ENCODE measurements at regions of chr17 and their contacts with region 1.

Region 1: DNA sequence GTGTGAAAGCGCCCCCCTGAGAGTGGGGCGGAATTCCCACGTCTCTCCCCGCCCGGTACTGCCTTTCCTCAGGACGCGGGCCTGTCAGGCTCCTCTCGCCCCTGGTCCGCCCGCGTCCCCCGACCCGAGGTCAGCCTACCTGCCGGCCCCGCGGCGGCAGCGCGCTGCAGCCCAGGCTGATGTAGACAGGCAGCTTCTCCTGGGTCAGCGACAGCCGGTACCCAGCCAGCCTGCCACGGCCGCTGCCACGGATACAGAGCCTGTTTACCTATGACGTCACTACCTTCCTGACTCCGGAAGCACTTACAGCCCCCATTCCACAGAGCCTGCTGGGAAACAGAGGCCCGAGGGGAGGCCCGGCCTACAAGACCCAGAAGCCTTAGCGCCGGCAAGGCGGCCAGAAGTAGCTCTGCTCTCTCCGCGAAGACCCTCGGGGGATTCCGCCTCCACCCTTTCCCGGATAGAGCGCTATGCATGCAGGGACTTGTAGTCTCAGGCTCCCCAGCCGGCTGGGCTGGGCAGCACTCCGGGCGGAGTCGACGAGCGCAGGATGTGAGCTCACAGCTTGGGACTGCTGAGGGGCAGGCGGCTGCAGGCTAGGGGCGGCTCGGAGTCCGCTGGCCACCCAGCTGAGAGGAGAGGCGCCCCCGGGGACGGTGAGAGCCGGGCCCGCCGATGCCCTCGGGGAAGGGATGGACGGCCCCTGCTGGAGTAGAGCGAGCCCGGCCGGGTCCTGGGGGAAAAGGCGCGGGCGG is at the starts of genes IFT20 and TNFAIP1:
- DNase-seq: peak; percentile 90
- ATAC-seq: peak; percentile 96
- H3K4me3 Mint-ChIP-seq: peak within 1 kb of the TSS; percentile 96
- H3K27ac Mint-ChIP-seq: peak within 1 kb of the TSS; percentile 89
- H3K4me1 Mint-ChIP-seq: peaks cover 37% of the 10 kb centered on the region
- H3K27me3 Mint-ChIP-seq: no peaks in the 10 kb centered on the region
- CTCF ChIP-seq: no peak
- total RNA-seq, gene IFT20: 24.9 and 25.9 TPM in 2 replicates
- total RNA-seq, gene TNFAIP1: 16.3 and 18.9 TPM in 2 replicates

Region 2: DNA sequence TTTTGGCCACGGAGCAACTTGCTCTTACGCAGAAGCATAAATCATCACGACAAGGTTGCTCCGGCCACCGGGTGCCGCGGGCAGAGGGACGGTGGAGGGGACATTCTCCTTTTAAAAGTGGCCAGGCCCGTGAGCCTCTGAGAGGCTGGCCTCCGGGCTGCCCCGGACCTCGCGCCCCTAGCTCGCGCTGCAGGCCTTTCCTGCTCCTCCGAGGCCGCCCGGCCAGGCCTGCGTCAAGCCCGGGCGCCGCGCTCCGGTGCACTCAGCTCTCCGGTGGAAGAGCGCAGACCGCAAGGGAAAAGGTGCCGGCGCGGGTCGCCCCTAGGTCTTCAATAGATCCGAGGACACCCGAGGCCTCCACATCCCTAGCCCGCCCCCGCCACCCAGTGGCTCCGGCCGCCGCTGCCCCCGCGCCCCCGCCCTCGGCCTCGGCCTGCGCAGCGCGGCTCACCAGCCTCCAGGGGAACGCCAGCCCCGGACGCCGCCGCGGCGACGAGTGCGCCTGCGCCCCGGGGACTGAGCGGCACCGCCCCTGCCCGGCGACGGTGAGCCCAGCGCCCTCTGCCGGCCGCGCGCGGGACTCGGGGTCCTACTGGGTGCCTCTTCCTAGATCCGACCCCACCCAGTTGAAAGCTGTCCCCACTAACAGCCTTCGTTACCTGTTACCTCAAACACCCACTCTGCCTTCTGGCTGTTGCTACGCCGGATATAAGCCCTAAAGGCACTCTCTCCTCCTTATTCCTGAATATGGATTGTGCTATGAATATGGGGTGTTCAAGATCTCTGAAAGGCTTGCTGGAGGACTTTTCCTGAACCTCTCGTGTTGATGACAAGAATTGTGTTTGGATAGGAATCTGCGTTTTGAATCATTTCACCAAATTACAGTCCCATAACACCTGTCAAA is 442.3 kb before region 1 on chr17 and contains the start of gene LYRM9:
- CTCF ChIA-PET with region 1: no interaction called
- POLR2A ChIA-PET with region 1: no interaction called
- intact Hi-C with region 1: loop called (anchors 2 kb)
- DNase-seq: peak; percentile 97
- ATAC-seq: peak; percentile 96
- H3K4me3 Mint-ChIP-seq: peak within 1 kb of the TSS; percentile 84
- H3K27ac Mint-ChIP-seq: peak within 1 kb of the TSS; percentile 69
- H3K4me1 Mint-ChIP-seq: peaks cover 17% of the 10 kb centered on the region
- H3K27me3 Mint-ChIP-seq: no peaks in the 10 kb centered on the region
- CTCF ChIP-seq: peak; percentile 91
- total RNA-seq, gene LYRM9: 7.2 and 7.5 TPM in 2 replicates

Region 3: DNA sequence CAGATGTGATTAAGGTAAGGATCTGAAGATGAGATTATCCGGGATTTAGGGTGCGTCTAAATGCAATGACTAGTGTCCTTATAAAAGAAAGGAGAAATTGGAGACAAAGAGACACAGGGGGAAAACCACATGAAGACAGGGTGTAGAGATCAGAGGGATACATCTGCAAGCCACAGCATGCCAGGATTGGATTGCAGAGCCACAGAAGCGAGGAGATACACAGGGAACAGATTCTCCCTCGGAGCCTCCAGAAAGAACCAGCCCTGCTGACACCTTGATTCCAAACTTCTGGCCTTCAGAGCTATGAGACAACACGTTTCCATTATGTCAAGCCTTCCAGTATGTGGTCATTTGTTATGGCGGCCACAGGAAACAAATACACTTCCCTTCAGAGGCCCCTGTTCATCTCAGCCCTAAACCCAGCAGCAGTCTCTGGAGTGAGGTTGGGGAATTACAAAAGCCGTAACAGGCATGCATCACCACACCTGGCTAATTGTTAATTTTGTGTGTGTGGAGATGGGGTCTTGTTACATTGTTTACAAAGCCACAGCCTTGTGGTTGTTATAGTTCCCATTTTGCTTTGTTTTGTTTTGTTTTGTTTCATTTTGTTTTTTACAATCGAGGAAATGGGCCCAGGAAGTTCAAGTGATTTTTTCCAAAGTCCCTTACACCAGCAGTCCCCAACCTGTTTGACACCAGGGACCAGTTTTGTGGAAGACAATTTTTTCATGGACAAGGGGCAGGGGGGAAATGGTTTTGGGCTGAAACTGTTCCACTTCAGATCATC is 390.6 kb before region 1 on chr17:
- CTCF ChIA-PET with region 1: no interaction called
- POLR2A ChIA-PET with region 1: no interaction called
- intact Hi-C with region 1: no loop called
- DNase-seq: no peak
- ATAC-seq: peak; percentile 40
- H3K4me3 Mint-ChIP-seq: peak overlapping the region; percentile 35
- H3K27ac Mint-ChIP-seq: peak overlapping the region; percentile 79
- H3K4me1 Mint-ChIP-seq: peaks cover 37% of the 10 kb centered on the region
- H3K27me3 Mint-ChIP-seq: no peaks in the 10 kb centered on the region
- CTCF ChIP-seq: no peak

Region 4: GRCh38 chr17:28318759-28319660 is 16.4 kb before region 1 on chr17 and contains the start of gene TMEM97:
- CTCF ChIA-PET with region 1: no interaction called
- POLR2A ChIA-PET with region 1: interaction called, 20 read pairs
- intact Hi-C with region 1: loop called (anchors 1 kb)
- DNase-seq: peak; percentile 85
- ATAC-seq: peak; percentile 98
- H3K4me3 Mint-ChIP-seq: peak within 1 kb of the TSS; percentile 90
- H3K27ac Mint-ChIP-seq: peak within 1 kb of the TSS; percentile 76
- H3K4me1 Mint-ChIP-seq: peaks cover 25% of the 10 kb centered on the region
- H3K27me3 Mint-ChIP-seq: no peaks in the 10 kb centered on the region
- CTCF ChIP-seq: no peak
- total RNA-seq, gene TMEM97: 16.1 and 17.6 TPM in 2 replicates

Region 5: DNA sequence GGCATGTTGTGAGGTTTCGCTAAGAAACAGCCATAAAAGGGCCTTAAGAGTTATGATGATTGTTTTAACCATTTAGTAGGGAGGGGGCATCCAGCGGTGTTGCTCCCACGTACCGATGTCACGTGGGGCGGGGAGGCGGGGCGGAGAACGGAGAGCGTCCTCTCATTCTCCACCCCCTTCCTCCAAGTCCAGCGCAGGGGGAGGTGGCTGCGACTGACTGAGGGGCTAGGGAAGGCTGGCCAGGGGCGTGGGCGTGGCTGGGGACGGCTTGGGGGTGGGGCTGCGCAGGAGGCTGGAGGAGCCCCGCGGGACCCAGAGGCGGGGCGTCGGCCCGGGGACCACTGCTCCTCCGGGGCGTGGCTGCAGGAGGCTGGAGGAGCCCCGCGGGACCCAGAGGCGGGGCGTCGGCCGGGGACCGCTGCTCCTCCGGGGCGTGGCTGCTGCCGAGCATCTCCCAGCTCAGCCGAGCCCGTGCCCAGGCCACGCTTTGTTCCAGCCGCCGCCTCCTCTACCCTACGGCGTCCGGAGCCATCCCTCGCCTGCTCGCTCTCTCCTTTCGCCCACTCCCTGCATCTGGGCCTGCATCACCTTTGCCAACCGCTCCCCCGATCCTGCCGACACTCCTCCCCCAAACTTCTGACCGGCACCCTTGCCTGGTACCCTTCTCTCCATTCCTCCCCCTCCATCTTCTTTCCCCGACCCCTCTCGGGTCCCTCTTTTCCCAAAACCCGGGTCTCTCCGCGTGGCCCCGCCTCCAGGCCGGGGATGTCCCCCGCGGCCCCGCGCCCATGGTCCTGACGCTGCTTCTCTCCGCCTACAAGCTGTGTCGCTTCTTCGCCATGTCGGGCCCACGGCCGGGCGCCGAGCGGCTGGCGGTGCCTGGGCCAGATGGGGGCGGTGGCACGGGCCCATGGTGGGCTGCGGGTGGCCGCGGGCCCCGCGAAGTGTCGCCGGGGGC is 36.1 kb after region 1 on chr17 and contains the start of gene SARM1:
- CTCF ChIA-PET with region 1: interaction called, 3 read pairs
- POLR2A ChIA-PET with region 1: interaction called, 13 read pairs
- intact Hi-C with region 1: loop called (anchors 1 kb)
- DNase-seq: peak; percentile 82
- ATAC-seq: peak; percentile 90
- H3K4me3 Mint-ChIP-seq: peak within 1 kb of the TSS; percentile 94
- H3K27ac Mint-ChIP-seq: peak within 1 kb of the TSS; percentile 85
- H3K4me1 Mint-ChIP-seq: peaks cover 23% of the 10 kb centered on the region
- H3K27me3 Mint-ChIP-seq: no peaks in the 10 kb centered on the region
- CTCF ChIP-seq: no peak
- total RNA-seq, gene SARM1: 15.0 and 19.9 TPM in 2 replicates

Region 6: GRCh38 chr17:28552246-28552999 is 217.0 kb after region 1 on chr17 and contains the start of gene UNC119:
- CTCF ChIA-PET with region 1: no interaction called
- POLR2A ChIA-PET with region 1: interaction called, 3 read pairs
- intact Hi-C with region 1: loop called (anchors 1 kb)
- DNase-seq: peak; percentile 85
- ATAC-seq: peak; percentile 66
- H3K4me3 Mint-ChIP-seq: peak within 1 kb of the TSS; percentile 97
- H3K27ac Mint-ChIP-seq: peak within 1 kb of the TSS; percentile 93
- H3K4me1 Mint-ChIP-seq: peaks cover 65% of the 10 kb centered on the region
- H3K27me3 Mint-ChIP-seq: no peaks in the 10 kb centered on the region
- CTCF ChIP-seq: no peak
- total RNA-seq, gene UNC119: 426 and 437 TPM in 2 replicates

Region 7: GRCh38 chr17:28940675-28941074 is 605.3 kb after region 1 on chr17:
- CTCF ChIA-PET with region 1: no interaction called
- POLR2A ChIA-PET with region 1: no interaction called
- intact Hi-C with region 1: no loop called
- DNase-seq: no peak
- ATAC-seq: no peak
- H3K4me3 Mint-ChIP-seq: no peak overlapping the region
- H3K27ac Mint-ChIP-seq: no peak overlapping the region
- H3K4me1 Mint-ChIP-seq: peaks cover 81% of the 10 kb centered on the region
- H3K27me3 Mint-ChIP-seq: no peaks in the 10 kb centered on the region
- CTCF ChIP-seq: no peak